CD4-positive, alpha-beta memory T cell (primary cell): ENCODE measurements at regions of chr6 and their contacts with region 1.

Region 1: GRCh38 chr6:131909408-131910218 is 41.6 kb downstream of the CCN2 start:
- DNase-seq: peak; percentile 68 to 75 (median 73)
- H3K4me3 ChIP-seq: no peak overlapping the region
- H3K4me3 Mint-ChIP-seq: peak overlapping the region in 6 of 8 donors; percentile 21 to 79 (median 42)
- H3K27ac ChIP-seq: no peak overlapping the region
- H3K27ac Mint-ChIP-seq: peak overlapping the region in 5 of 7 donors; percentile 31 to 85 (median 74)
- H3K4me1 ChIP-seq: peaks cover 17% of the 10 kb centered on the region
- H3K4me1 Mint-ChIP-seq: peaks cover 11 to 26% (median 15%) of the 10 kb centered on the region in 4 donors
- H3K27me3 ChIP-seq: no peaks in the 10 kb centered on the region
- H3K27me3 Mint-ChIP-seq: peaks cover 10 to 16% of the 10 kb centered on the region in 2 donors

Region 2: DNA sequence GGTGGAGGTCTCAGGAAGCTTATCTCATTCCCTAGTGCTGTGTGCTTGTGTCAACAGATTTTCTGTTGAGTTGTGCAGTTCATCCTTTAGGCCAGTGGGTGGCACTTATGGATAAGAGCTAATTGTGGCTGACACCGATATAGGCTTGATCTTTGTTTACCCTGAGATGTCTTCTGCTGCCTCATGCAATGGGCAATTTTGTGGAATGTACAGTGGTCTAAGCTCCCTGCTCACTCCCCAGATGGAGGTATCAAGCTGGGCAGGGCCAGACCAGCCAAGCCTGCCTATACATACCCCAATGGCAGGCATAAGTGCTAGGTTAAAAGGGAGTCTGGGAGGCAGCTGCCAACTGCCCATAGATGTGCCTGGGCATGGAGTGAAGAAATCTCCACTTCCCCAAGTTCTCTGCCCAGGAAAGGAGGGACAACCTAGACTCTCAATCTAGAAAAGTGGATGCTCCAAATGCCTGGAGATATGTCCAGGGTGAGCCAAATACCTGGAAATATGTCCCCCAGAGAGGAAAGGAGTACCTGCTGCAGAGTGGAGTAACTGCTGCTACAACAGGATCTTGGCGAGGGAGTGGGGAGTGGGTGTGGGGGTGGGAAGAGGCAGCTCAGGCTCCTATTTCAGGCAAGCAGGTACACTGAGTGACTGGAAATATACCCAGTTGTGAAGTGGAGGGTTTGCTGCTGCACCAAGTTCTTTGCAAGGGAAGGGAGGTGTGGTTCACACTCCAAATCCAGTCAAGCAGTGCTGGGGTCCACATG is 389.8 kb before region 1 on chr6:
- CTCF ChIA-PET with region 1: no interaction called
- POLR2A ChIA-PET with region 1: no interaction called
- intact Hi-C with region 1: loop called (anchors 10 kb)
- DNase-seq: peak; percentile 45 to 51 (median 49)
- H3K4me3 ChIP-seq: no peak overlapping the region
- H3K4me3 Mint-ChIP-seq: peak overlapping the region in 1 of 8 donors; percentile 47
- H3K27ac ChIP-seq: no peak overlapping the region
- H3K27ac Mint-ChIP-seq: peak overlapping the region in 3 of 7 donors; percentile 8 to 44 (median 33)
- H3K4me1 ChIP-seq: peaks cover 10% of the 10 kb centered on the region
- H3K4me1 Mint-ChIP-seq: peaks cover 10 to 25% (median 18%) of the 10 kb centered on the region in 4 donors
- H3K27me3 ChIP-seq: no peaks in the 10 kb centered on the region
- H3K27me3 Mint-ChIP-seq: peaks cover 0 to 2% of the 10 kb centered on the region in 2 donors

Region 3: GRCh38 chr6:131694831-131695426 is 214.7 kb before region 1 on chr6:
- CTCF ChIA-PET with region 1: interaction called, 19 read pairs
- POLR2A ChIA-PET with region 1: no interaction called
- intact Hi-C with region 1: no loop called
- DNase-seq: peak in 4 of 5 donors; percentile 2 to 21 (median 12)
- H3K4me3 ChIP-seq: no peak overlapping the region
- H3K4me3 Mint-ChIP-seq: no peak overlapping the region
- H3K27ac ChIP-seq: no peak overlapping the region
- H3K27ac Mint-ChIP-seq: no peak overlapping the region
- H3K4me1 ChIP-seq: no peaks in the 10 kb centered on the region
- H3K4me1 Mint-ChIP-seq: no peaks in the 10 kb centered on the region
- H3K27me3 ChIP-seq: no peaks in the 10 kb centered on the region
- H3K27me3 Mint-ChIP-seq: no peaks in the 10 kb centered on the region

Region 4: DNA sequence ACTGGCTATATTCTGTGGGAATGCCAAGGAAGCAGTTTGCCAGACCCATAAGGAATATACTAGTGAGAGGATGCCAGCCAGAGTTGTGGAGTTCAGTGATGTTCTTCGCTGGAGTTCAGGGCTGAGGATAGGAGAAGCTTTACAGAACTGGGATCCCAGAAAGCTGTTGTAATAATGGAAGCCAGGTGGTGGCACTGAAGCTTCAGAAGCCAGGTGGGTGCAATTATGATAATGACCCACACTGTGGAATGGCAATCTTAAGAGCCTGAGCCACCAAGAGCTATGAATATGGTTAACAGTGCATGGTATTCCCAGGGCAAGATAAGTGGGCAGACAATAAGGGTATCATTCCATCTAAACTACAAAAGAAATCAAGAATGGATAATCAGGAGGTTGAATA is 126.8 kb before region 1 on chr6:
- CTCF ChIA-PET with region 1: interaction called, 12 read pairs
- POLR2A ChIA-PET with region 1: no interaction called
- intact Hi-C with region 1: loop called (anchors 1 kb)
- DNase-seq: no peak
- H3K4me3 ChIP-seq: no peak overlapping the region
- H3K4me3 Mint-ChIP-seq: no peak overlapping the region
- H3K27ac ChIP-seq: no peak overlapping the region
- H3K27ac Mint-ChIP-seq: no peak overlapping the region
- H3K4me1 ChIP-seq: no peaks in the 10 kb centered on the region
- H3K4me1 Mint-ChIP-seq: no peaks in the 10 kb centered on the region
- H3K27me3 ChIP-seq: no peaks in the 10 kb centered on the region
- H3K27me3 Mint-ChIP-seq: peaks cover 2 to 10% of the 10 kb centered on the region in 2 donors